Dendritic cell treated with granulocyte-macrophage colony-stimulating factor and Interleukin-4, amounts not matched to agents 40 ng/mL and 50 ng/mL, for 4 days (primary cell): ENCODE measurements at regions of chr13 and their contacts with region 1.

Region 1: GRCh38 chr13:52450012-52450792 is at the start of gene VPS36:
- H3K4me3 Mint-ChIP-seq: peak within 1 kb of the TSS; percentile 96
- H3K27ac Mint-ChIP-seq: peak within 1 kb of the TSS; percentile 90
- H3K4me1 Mint-ChIP-seq: peaks cover 26% of the 10 kb centered on the region
- H3K27me3 Mint-ChIP-seq: no peaks in the 10 kb centered on the region

Region 2: DNA sequence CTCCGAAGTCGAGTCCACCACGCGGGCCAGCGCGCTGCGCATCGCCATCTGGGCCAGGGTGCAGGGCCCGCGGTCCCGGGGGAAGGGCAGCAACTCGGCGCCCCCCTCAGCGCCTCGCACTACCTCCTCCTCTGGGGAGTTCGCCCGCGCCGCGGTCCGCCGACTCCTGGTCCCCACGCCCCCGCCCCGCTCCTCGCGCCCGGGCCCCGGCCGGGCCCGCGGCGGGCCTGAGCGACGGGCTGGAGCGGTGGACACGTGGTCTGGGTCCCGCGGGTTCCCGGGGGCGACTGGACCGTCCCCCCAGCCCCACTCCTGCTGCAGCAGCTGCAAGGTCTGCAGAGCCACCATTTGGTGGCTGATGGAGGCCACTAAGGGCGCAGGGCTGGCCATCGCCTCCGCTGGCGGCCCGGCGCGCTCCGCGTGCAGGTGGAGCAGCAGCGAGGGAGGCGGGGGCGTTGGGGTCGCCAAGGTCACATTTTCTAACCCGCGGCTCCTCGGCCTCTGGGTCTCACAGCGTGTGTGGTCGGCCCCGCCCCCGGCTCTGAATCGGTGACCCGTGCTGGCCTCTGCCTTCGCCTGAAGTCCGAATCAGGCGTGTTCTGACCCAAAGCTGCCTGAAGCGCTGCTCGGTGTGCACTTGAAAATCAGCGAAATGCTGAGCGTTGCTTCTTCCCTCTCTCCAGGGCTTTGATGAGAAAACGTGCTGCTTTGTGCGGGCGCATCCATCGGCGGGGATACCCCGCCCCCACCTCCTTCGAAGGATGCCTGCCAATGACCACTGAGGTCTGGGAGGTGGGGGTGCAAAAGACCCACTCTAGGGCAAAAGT is 1606.7 kb before region 1 on chr13 and contains the start of gene DLEU7:
- intact Hi-C with region 1: no loop called
- H3K4me3 Mint-ChIP-seq: peak within 1 kb of the TSS; percentile 48
- H3K27ac Mint-ChIP-seq: no peak within 1 kb of the TSS
- H3K4me1 Mint-ChIP-seq: peaks cover 17% of the 10 kb centered on the region
- H3K27me3 Mint-ChIP-seq: peaks cover 49% of the 10 kb centered on the region

Region 3: GRCh38 chr13:52011632-52012511 is 438.3 kb before region 1 on chr13 and contains the start of gene ALG11:
- intact Hi-C with region 1: loop called (anchors 5 kb)
- H3K4me3 Mint-ChIP-seq: peak within 1 kb of the TSS; percentile 97
- H3K27ac Mint-ChIP-seq: peak within 1 kb of the TSS; percentile 95
- H3K4me1 Mint-ChIP-seq: peaks cover 16% of the 10 kb centered on the region
- H3K27me3 Mint-ChIP-seq: peaks cover 35% of the 10 kb centered on the region

Region 4: GRCh38 chr13:52194184-52194868 is 255.9 kb before region 1 on chr13:
- intact Hi-C with region 1: loop called (anchors 2 kb)
- H3K4me3 Mint-ChIP-seq: peak overlapping the region; percentile 96
- H3K27ac Mint-ChIP-seq: peak overlapping the region; percentile 93
- H3K4me1 Mint-ChIP-seq: peaks cover 12% of the 10 kb centered on the region
- H3K27me3 Mint-ChIP-seq: no peaks in the 10 kb centered on the region

Region 5: GRCh38 chr13:52348983-52349780 is 101.0 kb before region 1 on chr13:
- intact Hi-C with region 1: loop called (anchors 5 kb)
- H3K4me3 Mint-ChIP-seq: no peak overlapping the region
- H3K27ac Mint-ChIP-seq: no peak overlapping the region
- H3K4me1 Mint-ChIP-seq: no peaks in the 10 kb centered on the region
- H3K27me3 Mint-ChIP-seq: peaks cover 2% of the 10 kb centered on the region

Region 6: DNA sequence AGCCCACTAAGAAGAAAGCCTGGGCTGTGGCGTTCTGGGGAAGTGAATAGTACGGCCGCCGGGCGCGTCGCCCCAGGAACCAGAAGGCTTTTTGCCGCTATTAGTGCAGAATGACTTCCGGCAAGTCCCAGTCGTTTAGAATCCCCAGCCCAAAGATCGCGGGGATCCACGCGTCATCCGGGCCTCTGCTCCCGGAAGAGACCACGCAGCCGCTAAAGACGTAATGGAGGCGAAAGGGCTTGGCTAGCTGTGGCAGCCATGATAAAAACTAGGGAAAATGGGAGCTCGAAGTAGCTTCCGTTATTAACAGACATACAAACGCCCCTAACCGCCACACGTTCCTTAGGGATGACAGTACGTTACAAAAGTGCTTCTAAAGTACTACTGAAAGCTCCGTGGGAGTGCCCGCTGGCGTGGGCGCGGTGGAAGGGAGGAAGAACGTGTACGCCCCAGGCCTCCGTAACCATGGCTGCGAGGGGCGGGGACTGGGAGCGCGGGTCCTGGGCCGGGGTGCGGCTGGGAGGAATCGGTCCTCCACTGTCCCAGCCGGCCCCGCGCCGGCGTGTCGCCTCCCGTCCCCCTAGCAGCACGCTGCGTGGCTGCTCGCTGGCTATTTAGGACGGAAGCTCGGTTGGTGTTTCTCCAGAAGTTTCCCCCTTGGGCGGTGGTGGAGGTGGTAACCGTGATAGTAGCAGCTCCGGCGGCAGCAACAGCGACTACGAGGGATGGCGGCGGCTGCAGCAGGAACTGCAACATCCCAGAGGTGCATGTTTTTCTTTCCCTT is 202.2 kb after region 1 on chr13 and contains the start of gene SUGT1:
- intact Hi-C with region 1: loop called (anchors 1 kb)
- H3K4me3 Mint-ChIP-seq: no peak within 1 kb of the TSS
- H3K27ac Mint-ChIP-seq: no peak within 1 kb of the TSS
- H3K4me1 Mint-ChIP-seq: peaks cover 7% of the 10 kb centered on the region
- H3K27me3 Mint-ChIP-seq: no peaks in the 10 kb centered on the region